ENCODE measurements at regions of chr7 and their contacts with region 1.

Region 1: GRCh38 chr7:104231054-104232046 is 23.5 kb upstream of the ORC5 start:
- DNase-seq: peak; percentile 33 to 37 (median 34)
- H3K4me3 ChIP-seq: no peak overlapping the region
- H3K4me3 Mint-ChIP-seq: no peak overlapping the region
- H3K27ac ChIP-seq: no peak overlapping the region
- H3K27ac Mint-ChIP-seq: no peak overlapping the region
- H3K4me1 ChIP-seq: no peaks in the 10 kb centered on the region
- H3K4me1 Mint-ChIP-seq: peaks cover 0 to 5% (median 4%) of the 10 kb centered on the region in 4 donors
- H3K27me3 ChIP-seq: no peaks in the 10 kb centered on the region
- H3K27me3 Mint-ChIP-seq: peaks cover 7 to 18% of the 10 kb centered on the region in 2 donors

Region 2: DNA sequence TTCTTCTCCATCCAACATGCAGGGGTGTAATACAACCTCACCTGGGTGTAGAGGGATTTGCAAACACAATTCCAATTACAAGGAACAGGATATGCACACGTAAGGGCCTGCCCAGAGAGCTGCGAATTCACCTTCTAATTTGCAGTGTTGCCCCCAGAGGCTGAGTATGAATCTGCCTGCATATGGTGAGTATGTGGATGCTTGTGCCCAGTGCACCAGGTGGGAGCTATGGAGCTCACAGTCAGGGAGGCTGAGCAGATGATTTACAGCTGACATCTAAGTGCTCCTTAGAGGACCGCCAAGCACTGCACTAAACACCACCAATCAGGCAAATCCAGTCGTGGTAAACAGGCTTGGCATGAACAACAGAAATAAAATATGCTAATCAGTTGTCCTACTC is 373.9 kb before region 1 on chr7:
- CTCF ChIA-PET with region 1: no interaction called
- POLR2A ChIA-PET with region 1: no interaction called
- intact Hi-C with region 1: no loop called
- DNase-seq: no peak
- H3K4me3 ChIP-seq: no peak overlapping the region
- H3K4me3 Mint-ChIP-seq: no peak overlapping the region
- H3K27ac ChIP-seq: no peak overlapping the region
- H3K27ac Mint-ChIP-seq: no peak overlapping the region
- H3K4me1 ChIP-seq: no peaks in the 10 kb centered on the region
- H3K4me1 Mint-ChIP-seq: no peaks in the 10 kb centered on the region
- H3K27me3 ChIP-seq: no peaks in the 10 kb centered on the region
- H3K27me3 Mint-ChIP-seq: peaks cover 2 to 6% of the 10 kb centered on the region in 2 donors

Region 3: GRCh38 chr7:104267701-104268368 is 36.5 kb after region 1 on chr7:
- CTCF ChIA-PET with region 1: interaction called, 17 read pairs
- POLR2A ChIA-PET with region 1: no interaction called
- intact Hi-C with region 1: no loop called
- DNase-seq: no peak
- H3K4me3 ChIP-seq: no peak overlapping the region
- H3K4me3 Mint-ChIP-seq: no peak overlapping the region
- H3K27ac ChIP-seq: no peak overlapping the region
- H3K27ac Mint-ChIP-seq: no peak overlapping the region
- H3K4me1 ChIP-seq: no peaks in the 10 kb centered on the region
- H3K4me1 Mint-ChIP-seq: no peaks in the 10 kb centered on the region
- H3K27me3 ChIP-seq: no peaks in the 10 kb centered on the region
- H3K27me3 Mint-ChIP-seq: peaks cover 5 to 6% of the 10 kb centered on the region in 2 donors

Region 4: DNA sequence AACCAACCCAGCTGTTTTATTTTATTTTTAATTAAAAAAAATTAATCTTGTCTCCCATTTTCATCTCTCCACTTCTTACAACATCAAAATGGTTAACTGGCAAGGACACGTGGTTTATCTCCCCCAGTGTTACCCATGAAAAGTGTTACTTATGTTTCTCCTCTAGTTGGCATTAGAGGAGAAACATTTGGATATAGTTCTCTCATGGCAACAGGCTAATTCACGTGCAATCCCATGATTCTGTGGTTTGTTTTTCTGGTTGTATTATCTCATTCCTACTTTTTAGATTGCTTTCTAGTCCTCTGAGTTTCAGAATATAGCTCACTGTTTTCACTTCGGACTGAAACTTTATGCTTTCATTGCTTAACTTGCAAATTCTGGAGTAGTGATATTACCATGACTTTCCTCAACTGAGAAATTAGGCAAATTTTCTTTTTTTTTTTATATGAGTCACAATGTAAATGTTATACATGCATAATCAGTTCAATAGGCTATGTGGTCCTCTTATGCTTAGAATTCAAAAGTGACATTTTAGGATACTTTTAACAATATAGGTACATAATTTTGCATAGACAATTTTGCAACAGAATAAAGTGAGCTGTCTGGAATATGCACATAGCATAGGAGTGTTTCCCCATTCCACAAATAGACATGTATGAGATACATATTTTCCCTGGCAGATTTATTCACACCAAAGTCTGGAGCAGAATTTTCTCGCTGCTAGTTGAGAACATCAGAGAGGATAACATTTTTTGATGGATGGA is 140.0 kb after region 1 on chr7:
- CTCF ChIA-PET with region 1: no interaction called
- POLR2A ChIA-PET with region 1: no interaction called
- intact Hi-C with region 1: no loop called
- DNase-seq: no peak
- H3K4me3 ChIP-seq: no peak overlapping the region
- H3K4me3 Mint-ChIP-seq: no peak overlapping the region
- H3K27ac ChIP-seq: no peak overlapping the region
- H3K27ac Mint-ChIP-seq: no peak overlapping the region
- H3K4me1 ChIP-seq: no peaks in the 10 kb centered on the region
- H3K4me1 Mint-ChIP-seq: peaks cover 0 to 2% (median 1%) of the 10 kb centered on the region in 4 donors
- H3K27me3 ChIP-seq: no peaks in the 10 kb centered on the region
- H3K27me3 Mint-ChIP-seq: peaks cover 0 to 10% of the 10 kb centered on the region in 2 donors

Region 5: DNA sequence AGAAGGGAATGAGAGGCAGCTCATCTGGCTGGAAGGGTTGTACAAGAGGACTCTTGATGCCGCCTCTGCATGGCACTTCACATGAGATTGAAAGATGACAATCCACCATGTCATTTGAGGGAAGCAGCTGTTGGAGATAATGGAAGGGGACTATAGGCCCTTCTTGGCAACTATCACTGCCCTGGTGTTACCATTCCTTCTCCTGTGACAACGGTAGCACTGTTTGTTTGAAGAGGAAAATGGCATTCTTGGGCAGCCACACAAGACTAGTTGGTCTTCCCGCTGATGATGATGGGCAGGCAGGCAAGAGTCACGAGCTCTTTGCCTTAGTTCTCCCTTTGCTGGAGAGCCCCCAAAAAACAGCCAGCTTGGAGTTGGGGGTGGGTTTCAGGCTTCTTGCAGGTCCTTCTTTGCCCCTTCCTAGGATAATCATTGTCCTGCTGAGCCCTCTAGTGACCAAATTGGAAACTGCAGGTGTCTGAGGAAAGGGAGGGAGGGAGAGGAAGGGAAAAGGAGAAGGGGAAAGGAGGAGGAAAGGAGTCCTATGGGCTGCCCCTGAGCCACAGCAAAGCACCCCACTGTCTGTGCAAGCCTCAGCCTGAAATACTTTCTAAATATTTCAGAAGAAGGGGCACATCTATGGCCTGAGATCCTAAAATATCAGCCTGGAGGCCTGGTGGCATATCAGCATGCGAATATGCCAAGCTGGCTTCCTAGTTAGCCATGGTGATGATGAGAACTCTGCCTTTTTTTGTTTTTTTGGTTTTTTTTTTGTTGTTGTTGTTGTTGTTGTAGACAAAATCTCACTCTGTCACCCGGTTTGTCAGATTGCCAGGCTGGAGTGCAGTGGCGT is 617.0 kb after region 1 on chr7:
- CTCF ChIA-PET with region 1: interaction called, 36 read pairs
- POLR2A ChIA-PET with region 1: no interaction called
- intact Hi-C with region 1: loop called (anchors 1 kb)
- DNase-seq: peak; percentile 26 to 46 (median 36)
- H3K4me3 ChIP-seq: no peak overlapping the region
- H3K4me3 Mint-ChIP-seq: no peak overlapping the region
- H3K27ac ChIP-seq: no peak overlapping the region
- H3K27ac Mint-ChIP-seq: no peak overlapping the region
- H3K4me1 ChIP-seq: no peaks in the 10 kb centered on the region
- H3K4me1 Mint-ChIP-seq: no peaks in the 10 kb centered on the region
- H3K27me3 ChIP-seq: no peaks in the 10 kb centered on the region
- H3K27me3 Mint-ChIP-seq: peaks cover 19 to 20% of the 10 kb centered on the region in 2 donors

Region 6: GRCh38 chr7:105589356-105590077 is 1358.2 kb after region 1 on chr7:
- CTCF ChIA-PET with region 1: no interaction called
- POLR2A ChIA-PET with region 1: no interaction called
- intact Hi-C with region 1: loop called (anchors 5 kb)
- DNase-seq: peak; percentile 47 to 59 (median 53)
- H3K4me3 ChIP-seq: no peak overlapping the region
- H3K4me3 Mint-ChIP-seq: peak overlapping the region in 1 of 8 donors; percentile 42
- H3K27ac ChIP-seq: no peak overlapping the region
- H3K27ac Mint-ChIP-seq: peak overlapping the region in 4 of 7 donors; percentile 14 to 78 (median 54)
- H3K4me1 ChIP-seq: peaks cover 4% of the 10 kb centered on the region
- H3K4me1 Mint-ChIP-seq: peaks cover 4 to 6% (median 5%) of the 10 kb centered on the region in 4 donors
- H3K27me3 ChIP-seq: no peaks in the 10 kb centered on the region
- H3K27me3 Mint-ChIP-seq: no peaks in the 10 kb centered on the region